Posterior vena cava (tissue), 2 donors: ENCODE measurements at regions of chr9 and their contacts with region 1.

Region 1: GRCh38 chr9:24045150-24045549 is 219.1 kb upstream of the ELAVL2 start:
- DNase-seq: no peak

Region 2: DNA sequence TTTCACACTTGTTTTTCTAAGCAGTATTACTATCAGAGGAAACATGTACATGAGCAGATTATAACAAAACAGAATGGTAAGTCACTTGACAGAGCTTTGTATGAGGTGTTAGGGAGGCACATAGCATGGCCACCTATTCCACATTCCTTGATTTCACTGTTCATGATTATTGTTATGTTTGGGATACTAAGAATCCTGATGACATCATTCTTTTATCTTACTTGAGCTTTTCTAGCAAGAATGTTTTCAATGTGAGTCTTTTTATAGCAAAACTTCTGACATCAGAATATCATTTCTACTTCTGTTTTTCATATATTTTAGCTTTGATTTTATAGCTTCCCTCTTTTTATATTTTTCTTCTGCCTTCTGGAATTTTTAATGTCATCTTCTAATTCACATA is 1390.3 kb before region 1 on chr9:
- intact Hi-C with region 1: loop called in 1 of 2 experiments (anchors 5 kb)
- DNase-seq: no peak